Right ventricle myocardium superior (tissue), 1 donor: ENCODE measurements at regions of chr2 and their contacts with region 1.

Region 1: GRCh38 chr2:73163483-73164367 is 38.6 kb upstream of the NOTO start:
- DNase-seq: peak; percentile 67
- ATAC-seq: peak; percentile 85

Region 2: DNA sequence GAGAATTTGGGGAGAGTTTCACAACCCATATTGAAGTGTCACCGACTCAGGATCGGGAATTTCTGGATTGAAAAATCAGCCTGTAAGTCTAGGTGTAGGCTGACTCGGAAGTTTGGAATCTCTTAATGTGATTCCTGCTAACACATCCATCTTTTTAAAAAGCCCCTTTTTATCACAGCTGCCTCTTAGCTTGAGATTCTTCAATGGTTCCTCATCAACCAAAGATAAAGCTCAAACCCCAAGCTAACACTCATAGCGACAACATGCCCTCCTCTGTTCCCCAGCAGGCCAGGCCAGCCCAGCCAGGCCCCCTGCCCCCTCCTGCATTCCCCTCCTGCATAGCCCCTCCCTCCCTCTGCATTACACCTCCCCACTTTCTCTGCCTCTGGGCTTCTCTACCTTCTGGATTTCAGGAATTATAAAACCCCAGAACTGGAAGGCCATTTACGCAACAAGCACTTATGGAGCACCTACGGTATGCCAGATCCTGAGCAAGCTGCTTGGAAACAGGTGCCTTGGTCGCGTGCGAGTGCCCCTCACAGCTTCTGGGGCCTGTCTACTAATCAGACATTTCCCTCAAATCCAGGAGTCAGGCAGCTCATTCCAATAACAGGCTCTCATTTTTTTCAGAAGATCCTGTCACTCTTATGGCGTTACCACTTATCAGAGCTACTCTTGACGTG is 183.0 kb before region 1 on chr2:
- intact Hi-C with region 1: no loop called
- DNase-seq: no peak
- ATAC-seq: no peak

Region 3: GRCh38 chr2:72993147-72993932 is 170.4 kb before region 1 on chr2:
- intact Hi-C with region 1: loop called (anchors 5 kb)
- DNase-seq: no peak
- ATAC-seq: peak; percentile 44

Region 4: DNA sequence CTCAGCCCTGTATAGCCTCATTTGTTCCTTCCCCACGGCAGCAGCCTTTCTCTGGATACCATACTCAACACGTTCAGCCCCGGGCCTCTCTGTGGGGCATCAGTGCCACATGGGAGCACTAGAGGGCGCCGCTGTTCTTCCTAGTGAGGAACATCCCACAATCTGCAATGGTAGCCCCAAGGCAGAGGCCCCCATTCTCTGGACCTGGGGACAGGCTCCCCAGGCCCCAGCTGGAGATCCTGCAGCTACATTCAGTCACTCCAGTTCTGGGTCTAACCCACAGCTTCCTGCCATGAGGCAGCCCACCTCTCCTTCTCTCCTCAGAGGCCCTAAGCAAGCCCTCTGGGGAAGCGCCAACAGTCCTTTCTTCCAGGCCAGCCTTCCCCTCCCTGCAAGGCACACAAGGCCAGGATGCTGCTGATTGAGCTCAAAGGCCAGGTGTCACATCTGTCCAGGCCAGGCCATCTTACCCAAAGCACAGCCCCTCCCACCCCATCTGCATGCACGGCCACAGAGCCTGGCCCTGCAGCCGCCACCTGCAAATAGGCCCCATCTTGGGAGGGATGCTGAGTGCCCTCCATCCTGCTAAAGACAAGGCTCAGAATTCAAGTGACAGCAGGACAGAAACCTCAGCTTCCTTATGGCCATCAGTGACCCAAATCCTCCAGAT is 77.9 kb before region 1 on chr2:
- intact Hi-C with region 1: loop called (anchors 2 kb)
- DNase-seq: peak; percentile 93
- ATAC-seq: peak; percentile 87